CD4-positive, alpha-beta T cell (primary cell): ENCODE measurements at regions of chr9 and their contacts with region 1.

Region 1: DNA sequence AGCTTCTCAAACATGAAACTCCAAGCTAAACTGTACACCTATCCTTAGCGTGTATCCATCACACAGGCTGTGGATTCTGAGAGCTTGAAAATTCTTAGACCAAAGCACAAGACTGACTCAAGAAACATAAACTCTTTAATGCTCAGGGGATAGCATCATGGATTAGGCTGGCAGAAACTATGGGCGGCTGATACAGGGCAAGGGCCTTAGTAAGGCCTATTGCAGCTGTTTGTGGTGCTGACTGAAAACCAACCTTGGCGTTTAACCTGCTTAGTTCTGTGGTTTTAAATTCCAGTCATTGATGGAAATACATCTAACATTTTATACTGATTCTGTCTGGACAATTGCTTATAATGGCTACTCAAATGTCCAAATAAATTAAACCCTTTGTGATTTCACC is 183.7 kb downstream of the TLR4 start:
- DNase-seq: no peak
- ATAC-seq: no peak
- H3K4me3 ChIP-seq: no peak overlapping the region
- H3K4me3 Mint-ChIP-seq: no peak overlapping the region
- H3K27ac ChIP-seq: no peak overlapping the region
- H3K27ac Mint-ChIP-seq: no peak overlapping the region
- H3K4me1 ChIP-seq: no peaks in the 10 kb centered on the region
- H3K4me1 Mint-ChIP-seq: no peaks in the 10 kb centered on the region
- H3K27me3 ChIP-seq: no peaks in the 10 kb centered on the region
- H3K27me3 Mint-ChIP-seq: no peaks in the 10 kb centered on the region
- CTCF ChIP-seq: no peak

Region 2: DNA sequence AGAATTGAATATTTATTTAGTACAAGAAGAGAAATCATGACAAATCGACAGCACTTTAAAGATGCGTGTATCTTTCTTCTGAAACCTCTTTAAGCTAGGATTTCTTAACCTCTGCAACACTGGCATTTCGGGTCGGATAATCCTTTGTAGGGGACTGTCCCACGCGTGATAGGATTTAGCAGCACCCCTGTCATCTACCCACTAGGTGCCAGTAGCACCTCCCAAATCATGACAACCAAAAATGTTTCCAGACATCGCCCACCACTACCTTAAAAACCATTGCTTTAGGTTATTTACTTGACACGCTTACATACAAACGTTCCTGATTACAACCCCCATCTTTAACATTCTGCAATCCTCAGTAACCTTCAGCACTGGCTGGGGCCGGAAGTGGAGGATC is 977.7 kb before region 1 on chr9:
- CTCF ChIA-PET with region 1: no interaction called
- POLR2A ChIA-PET with region 1: no interaction called
- intact Hi-C with region 1: no loop called
- DNase-seq: no peak
- ATAC-seq: no peak
- H3K4me3 ChIP-seq: no peak overlapping the region
- H3K4me3 Mint-ChIP-seq: no peak overlapping the region
- H3K27ac ChIP-seq: no peak overlapping the region
- H3K27ac Mint-ChIP-seq: no peak overlapping the region
- H3K4me1 ChIP-seq: no peaks in the 10 kb centered on the region
- H3K4me1 Mint-ChIP-seq: no peaks in the 10 kb centered on the region
- H3K27me3 ChIP-seq: no peaks in the 10 kb centered on the region
- H3K27me3 Mint-ChIP-seq: no peaks in the 10 kb centered on the region
- CTCF ChIP-seq: no peak

Region 3: GRCh38 chr9:117926031-117926658 is 38.2 kb after region 1 on chr9:
- CTCF ChIA-PET with region 1: no interaction called
- POLR2A ChIA-PET with region 1: no interaction called
- intact Hi-C with region 1: loop called in 1 of 2 experiments (anchors 1 kb)
- DNase-seq: no peak
- ATAC-seq: no peak
- H3K4me3 ChIP-seq: no peak overlapping the region
- H3K4me3 Mint-ChIP-seq: no peak overlapping the region
- H3K27ac ChIP-seq: no peak overlapping the region
- H3K27ac Mint-ChIP-seq: no peak overlapping the region
- H3K4me1 ChIP-seq: no peaks in the 10 kb centered on the region
- H3K4me1 Mint-ChIP-seq: no peaks in the 10 kb centered on the region
- H3K27me3 ChIP-seq: no peaks in the 10 kb centered on the region
- H3K27me3 Mint-ChIP-seq: no peaks in the 10 kb centered on the region
- CTCF ChIP-seq: no peak